ENCODE measurements at regions of chr9 and their contacts with region 1.

Region 1: GRCh38 chr9:113446323-113446740 is 17.2 kb upstream of the RGS3 start:
- DNase-seq: no peak
- H3K4me3 Mint-ChIP-seq: no peak overlapping the region
- H3K27ac Mint-ChIP-seq: peak overlapping the region; percentile 55
- H3K4me1 Mint-ChIP-seq: no peaks in the 10 kb centered on the region
- H3K27me3 Mint-ChIP-seq: no peaks in the 10 kb centered on the region

Region 2: DNA sequence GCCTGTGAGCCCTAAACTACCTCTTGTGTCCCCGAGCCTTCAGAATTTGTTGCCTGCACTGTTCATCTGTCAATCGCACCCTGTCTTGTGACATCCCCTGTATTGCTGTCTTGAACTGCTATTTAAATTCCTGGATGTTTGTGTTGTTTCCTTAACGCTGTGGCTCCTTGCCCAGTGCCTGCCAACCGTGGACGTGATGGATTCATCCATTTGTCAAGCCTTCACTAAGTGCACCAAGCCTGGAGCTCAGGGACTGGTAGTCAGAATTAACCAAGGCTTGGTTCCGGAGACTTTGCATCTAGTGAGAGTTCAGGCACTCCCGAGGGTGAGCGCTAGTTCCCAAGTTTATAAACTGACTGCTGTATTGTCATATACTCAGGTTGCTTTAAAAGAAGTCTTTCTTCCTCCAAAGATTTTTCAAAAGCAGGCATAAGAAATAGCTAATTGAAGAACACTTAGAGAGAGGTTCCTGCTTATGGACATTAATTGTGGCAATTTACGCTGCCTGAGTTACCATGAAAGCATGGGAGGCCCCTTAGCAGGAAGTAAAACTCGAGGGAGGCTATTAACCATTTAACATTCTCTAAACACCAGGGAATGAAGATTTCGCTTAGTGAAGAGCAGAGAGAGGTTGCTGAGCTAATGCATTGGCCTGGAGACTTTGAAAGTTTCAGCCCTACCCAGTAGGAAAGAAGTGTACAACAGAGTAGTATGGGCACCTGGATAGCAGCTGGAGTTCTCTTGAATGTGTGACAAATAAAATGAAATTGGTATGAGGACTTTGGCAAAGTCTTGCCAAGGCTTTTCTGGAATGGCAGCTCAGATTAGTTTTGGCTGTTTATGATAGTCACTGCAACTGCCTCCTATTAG is 46.2 kb after region 1 on chr9:
- CTCF ChIA-PET with region 1: interaction called, 10 read pairs
- POLR2A ChIA-PET with region 1: no interaction called
- intact Hi-C with region 1: no loop called
- DNase-seq: no peak
- H3K4me3 Mint-ChIP-seq: no peak overlapping the region
- H3K27ac Mint-ChIP-seq: no peak overlapping the region
- H3K4me1 Mint-ChIP-seq: no peaks in the 10 kb centered on the region
- H3K27me3 Mint-ChIP-seq: no peaks in the 10 kb centered on the region

Region 3: GRCh38 chr9:113523421-113524236 is 77.3 kb after region 1 on chr9:
- CTCF ChIA-PET with region 1: interaction called, 15 read pairs
- POLR2A ChIA-PET with region 1: no interaction called
- intact Hi-C with region 1: no loop called
- DNase-seq: peak; percentile 80
- H3K4me3 Mint-ChIP-seq: peak overlapping the region; percentile 27
- H3K27ac Mint-ChIP-seq: peak overlapping the region; percentile 53
- H3K4me1 Mint-ChIP-seq: peaks cover 60% of the 10 kb centered on the region
- H3K27me3 Mint-ChIP-seq: no peaks in the 10 kb centered on the region

Measured in activated CD4-positive, alpha-beta memory T cell treated with anti-CD3 and anti-CD28 coated beads for 36 hours (primary cell).